ENCODE measurements at regions of chr18 and their contacts with region 1.

Region 1: DNA sequence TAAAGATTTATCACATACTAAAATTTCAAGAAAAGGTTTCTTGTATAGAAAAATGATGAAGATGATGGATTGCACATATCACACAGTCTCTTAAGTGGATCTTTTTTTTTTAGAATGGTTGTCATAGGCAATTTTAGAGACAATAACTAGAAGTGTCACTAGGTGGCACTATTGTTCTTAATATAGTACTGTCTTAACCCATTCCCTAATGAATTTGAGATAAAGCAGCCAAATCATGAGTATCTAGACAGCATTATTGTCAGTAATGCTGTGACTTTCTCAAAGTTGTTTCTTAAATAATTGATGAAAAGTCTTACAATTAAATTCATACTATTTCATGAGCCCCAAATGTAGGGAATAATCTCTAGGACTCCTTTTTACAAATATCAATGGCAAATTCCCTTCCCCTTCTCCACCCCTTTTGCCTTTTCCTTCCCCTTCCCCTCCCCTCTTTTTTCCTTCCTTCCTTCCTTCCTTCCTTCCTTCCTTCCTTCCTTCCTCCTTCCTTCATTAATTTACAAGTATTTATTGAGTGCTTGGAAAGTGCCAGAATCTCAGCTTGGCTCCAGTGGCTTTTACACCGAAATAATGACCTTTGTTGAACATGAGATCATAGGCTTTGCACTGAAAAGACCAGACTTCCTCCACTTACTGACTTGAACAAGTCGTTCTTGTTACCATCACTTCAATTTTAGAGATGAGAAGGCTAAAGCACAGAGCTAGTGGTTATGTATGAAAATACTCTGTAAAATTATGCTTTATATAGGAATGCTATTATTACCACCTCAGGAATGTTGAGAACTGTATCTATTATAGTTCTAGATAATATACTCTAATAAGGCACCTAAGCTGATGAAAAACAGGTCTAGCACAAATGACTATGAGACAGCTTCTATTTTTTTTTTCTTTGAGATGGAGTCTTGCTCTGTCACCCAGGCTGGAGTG is 19.8 kb downstream of the MYL12B start:
- DNase-seq: peak in 1 of 2 experiments; percentile 75
- H3K4me3 ChIP-seq: no peak overlapping the region
- H3K27ac ChIP-seq: peak overlapping the region; percentile 23; the same call in 1 of the 2 replicates
- H3K4me1 ChIP-seq: peaks cover 24% of the 10 kb centered on the region
- H3K27me3 ChIP-seq: no peaks in the 10 kb centered on the region
- CTCF ChIP-seq: peak; percentile 85

Region 2: GRCh38 chr18:3135536-3135935 is 146.2 kb before region 1 on chr18:
- CTCF ChIA-PET with region 1: no interaction called
- POLR2A ChIA-PET with region 1: no interaction called
- intact Hi-C with region 1: no loop called
- DNase-seq: no peak
- H3K4me3 ChIP-seq: no peak overlapping the region
- H3K27ac ChIP-seq: no peak overlapping the region
- H3K4me1 ChIP-seq: no peaks in the 10 kb centered on the region
- H3K27me3 ChIP-seq: no peaks in the 10 kb centered on the region
- CTCF ChIP-seq: no peak

Region 3: GRCh38 chr18:3321133-3321812 is 39.5 kb after region 1 on chr18:
- CTCF ChIA-PET with region 1: no interaction called
- POLR2A ChIA-PET with region 1: no interaction called
- intact Hi-C with region 1: loop called (anchors 5 kb)
- DNase-seq: peak; percentile 88 to 93
- H3K4me3 ChIP-seq: no peak overlapping the region
- H3K27ac ChIP-seq: peak overlapping the region; percentile 74
- H3K4me1 ChIP-seq: peaks cover 32% of the 10 kb centered on the region
- H3K27me3 ChIP-seq: no peaks in the 10 kb centered on the region
- CTCF ChIP-seq: no peak

Region 4: DNA sequence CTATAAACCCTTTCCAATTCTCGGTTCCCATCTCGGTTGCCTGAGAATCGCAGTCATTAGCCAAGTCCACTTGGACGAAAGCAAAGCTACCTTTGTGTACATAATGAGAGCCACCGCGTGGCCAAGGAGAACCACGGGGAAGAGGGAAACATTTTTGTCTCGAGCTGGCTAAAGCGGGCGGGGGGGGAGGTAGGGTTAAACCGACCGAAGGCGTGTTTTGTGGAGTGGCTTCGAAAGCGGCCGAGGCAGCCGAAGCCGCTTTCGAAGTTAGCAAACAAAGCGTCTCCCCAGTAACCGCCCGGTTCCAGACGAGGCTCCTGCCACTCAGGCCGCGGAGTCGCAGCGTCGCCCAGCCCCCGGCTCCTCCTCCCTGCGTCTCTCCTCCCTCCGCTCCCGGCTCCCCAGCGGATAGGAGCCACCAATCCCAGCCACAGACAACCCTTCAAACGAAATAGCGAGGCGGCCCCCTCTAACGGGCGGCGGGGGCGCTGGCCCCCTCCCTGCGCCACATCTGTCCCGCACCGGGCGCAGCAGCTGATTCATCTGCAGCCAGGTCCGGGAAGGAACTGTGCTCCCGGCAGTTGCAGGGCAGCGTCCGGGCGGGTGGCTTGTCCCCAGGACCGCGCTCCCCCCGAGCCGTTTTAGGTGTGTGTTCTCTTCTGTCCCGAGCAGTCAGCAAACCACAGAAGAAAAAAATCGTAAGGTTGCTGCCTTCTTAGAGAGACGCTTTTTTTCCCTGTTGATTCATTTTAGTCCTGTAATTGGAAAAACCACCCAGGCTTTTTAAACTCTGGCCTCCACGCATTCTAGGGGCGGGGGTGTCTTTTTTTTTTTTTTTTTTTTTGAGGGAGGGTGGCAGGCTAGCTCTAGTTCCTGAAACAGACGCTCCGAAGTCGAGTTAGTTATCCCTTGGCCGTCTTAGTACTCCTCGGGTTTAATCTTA is 166.4 kb after region 1 on chr18:
- CTCF ChIA-PET with region 1: interaction called, 21 read pairs
- POLR2A ChIA-PET with region 1: interaction called, 31 read pairs
- intact Hi-C with region 1: loop called (anchors 1 kb)
- DNase-seq: peak; percentile 95 to 98
- H3K4me3 ChIP-seq: peak overlapping the region; percentile 83
- H3K27ac ChIP-seq: peak overlapping the region; percentile 96
- H3K4me1 ChIP-seq: peaks cover 35% of the 10 kb centered on the region
- H3K27me3 ChIP-seq: no peaks in the 10 kb centered on the region
- CTCF ChIP-seq: no peak; the same call in 1 of the 2 replicates

Region 5: DNA sequence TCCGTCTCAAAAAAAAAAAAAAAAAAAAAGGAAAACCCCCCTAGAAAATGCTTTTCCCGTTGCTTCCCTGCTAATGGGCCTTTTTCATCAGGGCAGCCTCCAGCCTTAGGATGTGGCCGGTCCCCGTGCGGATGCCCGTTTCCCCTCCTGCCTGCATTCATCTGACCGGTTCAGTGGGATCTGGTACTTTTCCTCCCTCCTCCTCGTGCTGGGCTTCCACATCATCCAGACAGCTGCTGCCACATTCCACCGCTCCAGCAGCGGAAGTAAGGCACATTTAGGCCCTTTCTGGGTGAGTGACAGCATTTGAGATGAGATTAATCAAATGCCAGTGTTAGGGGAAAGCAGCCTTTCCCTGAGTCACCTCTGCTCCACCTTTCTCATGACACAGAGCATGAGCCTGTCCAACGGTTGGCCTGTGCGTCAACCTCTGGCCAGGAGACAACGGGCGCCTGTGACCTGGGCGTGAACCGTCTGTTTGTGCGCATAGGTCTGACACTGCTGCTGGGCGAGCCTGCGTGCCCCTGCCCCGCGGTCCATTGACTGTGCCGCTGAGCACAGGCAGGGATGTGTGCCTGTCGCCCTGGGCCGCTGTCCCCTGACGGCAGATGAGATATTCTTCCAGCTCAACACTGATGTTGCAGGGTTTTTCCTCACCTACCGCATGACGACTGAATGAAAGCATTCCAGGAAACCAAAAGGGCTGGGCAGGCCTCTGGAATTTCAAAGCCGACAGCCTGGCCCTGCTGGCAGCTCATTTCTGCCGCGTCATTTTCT is 342.2 kb after region 1 on chr18:
- CTCF ChIA-PET with region 1: no interaction called
- POLR2A ChIA-PET with region 1: interaction called, 6 read pairs
- intact Hi-C with region 1: loop called (anchors 1 kb)
- DNase-seq: peak; percentile 94 to 98
- H3K4me3 ChIP-seq: peak overlapping the region; percentile 58
- H3K27ac ChIP-seq: peak overlapping the region; percentile 100
- H3K4me1 ChIP-seq: peaks cover 62% of the 10 kb centered on the region
- H3K27me3 ChIP-seq: no peaks in the 10 kb centered on the region
- CTCF ChIP-seq: no peak

Region 6: DNA sequence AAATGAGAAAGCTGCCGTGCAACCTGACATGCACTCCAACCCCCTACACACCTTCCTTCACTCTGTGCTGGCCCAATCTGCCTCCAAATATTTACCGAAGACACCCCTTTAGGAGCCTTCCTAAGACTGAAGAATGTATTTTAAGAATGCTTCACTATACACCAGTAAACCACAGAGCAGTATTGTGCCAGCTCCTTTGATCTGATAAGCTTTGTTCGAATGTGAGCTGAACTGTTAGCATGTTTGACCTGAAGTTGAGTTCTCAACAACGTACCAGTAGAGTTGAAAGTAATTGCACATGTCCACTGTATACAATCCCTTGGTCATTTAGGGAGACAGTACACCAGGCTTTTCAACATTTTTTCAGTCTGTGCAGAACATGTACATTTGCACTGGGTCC is 427.5 kb after region 1 on chr18:
- CTCF ChIA-PET with region 1: interaction called, 11 read pairs
- POLR2A ChIA-PET with region 1: no interaction called
- intact Hi-C with region 1: no loop called
- DNase-seq: no peak
- H3K4me3 ChIP-seq: no peak overlapping the region
- H3K27ac ChIP-seq: no peak overlapping the region
- H3K4me1 ChIP-seq: peaks cover 11% of the 10 kb centered on the region
- H3K27me3 ChIP-seq: no peaks in the 10 kb centered on the region
- CTCF ChIP-seq: no peak

Region 7: GRCh38 chr18:3995476-3996102 is 713.9 kb after region 1 on chr18:
- CTCF ChIA-PET with region 1: no interaction called
- POLR2A ChIA-PET with region 1: no interaction called
- intact Hi-C with region 1: loop called (anchors 1 kb)
- DNase-seq: peak in 1 of 2 experiments; percentile 45
- H3K4me3 ChIP-seq: no peak overlapping the region
- H3K27ac ChIP-seq: no peak overlapping the region
- H3K4me1 ChIP-seq: no peaks in the 10 kb centered on the region
- H3K27me3 ChIP-seq: no peaks in the 10 kb centered on the region
- CTCF ChIP-seq: peak; percentile 89